Activated naive CD4-positive, alpha-beta T cell treated with anti-CD3 and anti-CD28 coated beads for 36 hours (primary cell): ENCODE measurements at regions of chr13 and their contacts with region 1.

Region 1: GRCh38 chr13:48400850-48401291 is 12.0 kb downstream of the LPAR6 start:
- DNase-seq: no peak
- H3K4me3 Mint-ChIP-seq: no peak overlapping the region
- H3K27ac Mint-ChIP-seq: peak overlapping the region; percentile 9
- H3K4me1 Mint-ChIP-seq: peaks cover 58% of the 10 kb centered on the region
- H3K27me3 Mint-ChIP-seq: no peaks in the 10 kb centered on the region

Region 2: DNA sequence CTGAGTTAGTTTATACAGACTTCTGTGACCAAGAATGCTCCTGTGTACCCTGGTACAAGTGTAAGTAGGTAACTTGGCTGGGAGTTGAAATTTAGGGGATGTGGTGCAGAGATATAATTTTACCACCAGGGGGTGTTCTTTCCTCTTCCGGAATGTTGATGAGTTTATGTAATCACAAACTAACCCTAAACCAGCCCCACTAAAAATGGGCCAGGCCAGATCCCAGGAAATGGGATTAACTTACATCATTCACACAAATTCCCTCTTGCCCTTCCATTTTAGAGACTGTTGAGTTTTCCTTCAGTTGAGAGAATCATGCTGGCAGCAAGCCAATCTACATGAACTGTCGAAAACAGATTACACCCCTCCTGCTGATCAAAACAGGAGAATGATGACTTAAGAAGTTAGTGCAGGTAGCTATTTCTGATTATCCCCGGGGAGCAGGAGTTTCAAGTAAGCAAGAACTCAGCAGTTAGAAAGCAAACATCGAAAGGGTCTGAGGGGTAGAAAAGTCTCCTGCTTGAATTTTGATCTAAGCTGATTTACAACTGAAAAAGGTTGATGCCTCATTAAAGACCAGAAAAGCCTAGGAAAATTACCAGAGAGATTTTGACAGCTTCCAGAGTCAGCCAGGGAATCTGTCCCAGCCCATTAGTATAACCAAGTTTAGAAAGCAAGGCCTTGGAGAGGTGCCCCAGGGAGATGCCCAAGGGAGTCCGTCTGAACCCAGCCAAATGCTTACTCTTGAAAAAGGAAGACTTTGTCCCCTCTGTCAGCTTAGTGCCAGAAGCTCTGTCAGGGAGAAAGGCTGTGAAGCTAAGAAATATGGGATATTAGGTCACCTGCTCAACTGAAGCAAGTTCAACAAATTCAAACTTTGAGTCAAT is 273.7 kb before region 1 on chr13:
- CTCF ChIA-PET with region 1: no interaction called
- intact Hi-C with region 1: loop called (anchors 5 kb)
- DNase-seq: peak; percentile 46
- H3K4me3 Mint-ChIP-seq: peak overlapping the region; percentile 0
- H3K27ac Mint-ChIP-seq: peak overlapping the region; percentile 44
- H3K4me1 Mint-ChIP-seq: peaks cover 29% of the 10 kb centered on the region
- H3K27me3 Mint-ChIP-seq: no peaks in the 10 kb centered on the region

Region 3: DNA sequence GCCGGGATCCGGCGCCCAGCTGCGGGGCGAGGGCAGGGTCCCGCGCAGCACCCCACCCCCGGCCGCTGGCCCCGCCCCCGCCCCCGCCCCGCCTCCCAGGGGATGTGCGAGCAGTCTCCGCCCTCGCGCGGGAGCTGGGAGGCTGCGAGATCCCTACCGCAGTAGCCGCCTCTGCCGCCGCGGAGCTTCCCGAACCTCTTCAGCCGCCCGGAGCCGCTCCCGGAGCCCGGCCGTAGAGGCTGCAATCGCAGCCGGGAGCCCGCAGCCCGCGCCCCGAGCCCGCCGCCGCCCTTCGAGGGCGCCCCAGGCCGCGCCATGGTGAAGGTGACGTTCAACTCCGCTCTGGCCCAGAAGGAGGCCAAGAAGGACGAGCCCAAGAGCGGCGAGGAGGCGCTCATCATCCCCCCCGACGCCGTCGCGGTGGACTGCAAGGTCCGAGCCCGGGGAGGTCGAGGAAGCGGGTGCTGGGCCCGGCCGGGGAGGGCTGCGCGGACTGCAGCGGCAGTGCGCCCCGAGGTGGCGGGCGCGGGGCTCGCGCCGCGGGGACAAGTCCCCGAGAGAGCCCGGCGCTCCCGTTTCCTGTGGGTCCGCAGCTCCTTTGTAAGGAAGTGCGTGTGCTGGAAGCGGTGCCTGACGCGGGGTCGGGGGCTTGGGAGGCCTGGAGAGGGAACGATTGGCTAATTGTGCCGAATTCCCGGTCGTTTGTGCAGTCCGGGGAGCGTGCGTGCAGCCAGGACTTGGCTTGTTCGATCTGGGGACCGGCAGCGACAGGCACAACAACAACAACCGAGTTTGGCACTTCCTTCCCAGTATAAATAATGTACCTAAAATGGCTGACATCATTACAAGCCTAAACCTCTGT is 167.6 kb before region 1 on chr13 and contains the start of gene ITM2B:
- CTCF ChIA-PET with region 1: no interaction called
- intact Hi-C with region 1: loop called (anchors 5 kb)
- DNase-seq: peak; percentile 70
- H3K4me3 Mint-ChIP-seq: peak within 1 kb of the TSS; percentile 87
- H3K27ac Mint-ChIP-seq: peak within 1 kb of the TSS; percentile 94
- H3K4me1 Mint-ChIP-seq: peaks cover 60% of the 10 kb centered on the region
- H3K27me3 Mint-ChIP-seq: no peaks in the 10 kb centered on the region
- total RNA-seq, gene ITM2B: 110 to 112 TPM

Region 4: GRCh38 chr13:48412881-48413351 is 12.0 kb after region 1 on chr13 and contains the start of gene LPAR6:
- CTCF ChIA-PET with region 1: no interaction called
- intact Hi-C with region 1: loop called (anchors 1 kb)
- DNase-seq: peak; percentile 20
- H3K4me3 Mint-ChIP-seq: peak within 1 kb of the TSS; percentile 84
- H3K27ac Mint-ChIP-seq: peak within 1 kb of the TSS; percentile 92
- H3K4me1 Mint-ChIP-seq: peaks cover 33% of the 10 kb centered on the region
- H3K27me3 Mint-ChIP-seq: no peaks in the 10 kb centered on the region
- total RNA-seq, gene LPAR6: 6.1 to 6.6 TPM

Region 5: GRCh38 chr13:48429886-48430285 is 29.0 kb after region 1 on chr13:
- CTCF ChIA-PET with region 1: no interaction called
- intact Hi-C with region 1: no loop called
- DNase-seq: no peak
- H3K4me3 Mint-ChIP-seq: no peak overlapping the region
- H3K27ac Mint-ChIP-seq: no peak overlapping the region
- H3K4me1 Mint-ChIP-seq: peaks cover 38% of the 10 kb centered on the region
- H3K27me3 Mint-ChIP-seq: no peaks in the 10 kb centered on the region

Region 6: DNA sequence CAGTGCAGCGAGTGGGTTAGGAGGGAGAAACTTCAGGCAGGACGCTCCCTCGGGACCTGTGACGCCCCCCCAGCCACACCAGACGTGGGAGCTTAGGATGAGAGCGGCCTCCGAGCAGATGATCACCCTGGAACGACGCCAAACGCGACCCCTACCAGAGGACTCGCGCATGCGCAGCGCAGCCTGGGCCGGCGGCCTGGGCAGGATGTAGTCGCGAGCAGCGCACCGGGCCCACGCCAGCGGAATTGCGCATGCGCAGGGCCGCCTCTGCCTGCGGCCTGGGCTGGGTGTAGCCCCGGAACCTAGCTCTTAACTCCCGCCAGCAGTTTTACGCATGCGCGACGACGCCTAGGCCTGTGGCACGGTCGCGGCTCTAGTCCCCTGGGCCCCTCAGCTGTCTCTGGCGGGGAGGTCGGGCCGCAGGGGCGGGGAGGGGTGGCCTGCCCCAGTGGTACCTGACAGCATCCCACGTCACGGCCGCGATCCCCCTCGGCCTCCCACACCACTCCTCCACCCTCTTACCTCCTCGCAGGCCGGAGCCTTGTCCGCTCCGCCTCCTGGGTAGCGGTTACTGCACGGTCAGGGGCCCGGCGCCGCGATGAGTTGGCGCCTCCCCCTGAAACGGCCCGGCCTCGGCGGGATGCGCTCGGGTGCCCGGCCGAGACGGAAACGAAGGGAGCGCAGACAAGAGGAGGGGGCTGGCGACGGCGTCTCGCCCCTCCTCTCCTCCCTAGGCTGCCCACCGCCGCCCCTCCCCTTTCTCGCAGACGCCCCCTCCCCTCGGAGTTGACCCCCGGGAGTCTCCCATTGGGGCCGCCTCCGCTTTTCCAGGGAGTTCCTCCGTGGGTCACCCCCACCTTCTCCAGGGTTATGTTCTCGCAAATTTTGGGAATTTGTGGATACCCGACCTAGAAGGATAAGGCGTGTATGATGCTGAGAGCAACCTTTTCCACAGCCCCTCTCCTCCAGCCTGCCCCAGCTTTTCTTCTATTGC is 131.9 kb after region 1 on chr13 and contains the start of gene RCBTB2:
- CTCF ChIA-PET with region 1: no interaction called
- intact Hi-C with region 1: loop called (anchors 1 kb)
- DNase-seq: peak; percentile 98
- H3K4me3 Mint-ChIP-seq: peak within 1 kb of the TSS; percentile 93
- H3K27ac Mint-ChIP-seq: peak within 1 kb of the TSS; percentile 97
- H3K4me1 Mint-ChIP-seq: peaks cover 17% of the 10 kb centered on the region
- H3K27me3 Mint-ChIP-seq: no peaks in the 10 kb centered on the region
- total RNA-seq, gene RCBTB2: 1.2 to 1.4 TPM

Region 7: GRCh38 chr13:48595431-48596429 is 194.9 kb after region 1 on chr13:
- CTCF ChIA-PET with region 1: no interaction called
- intact Hi-C with region 1: no loop called
- DNase-seq: peak; percentile 75
- H3K4me3 Mint-ChIP-seq: no peak overlapping the region
- H3K27ac Mint-ChIP-seq: no peak overlapping the region
- H3K4me1 Mint-ChIP-seq: peaks cover 4% of the 10 kb centered on the region
- H3K27me3 Mint-ChIP-seq: no peaks in the 10 kb centered on the region

Region 8: GRCh38 chr13:48653472-48653939 is 252.6 kb after region 1 on chr13 and contains the start of gene CYSLTR2:
- CTCF ChIA-PET with region 1: no interaction called
- intact Hi-C with region 1: loop called (anchors 5 kb)
- DNase-seq: peak; percentile 27
- H3K4me3 Mint-ChIP-seq: peak within 1 kb of the TSS; percentile 75
- H3K27ac Mint-ChIP-seq: peak within 1 kb of the TSS; percentile 82
- H3K4me1 Mint-ChIP-seq: peaks cover 29% of the 10 kb centered on the region
- H3K27me3 Mint-ChIP-seq: no peaks in the 10 kb centered on the region
- total RNA-seq, gene CYSLTR2: 1.3 to 1.7 TPM

Region 9: GRCh38 chr13:48879432-48879831 is 478.6 kb after region 1 on chr13:
- CTCF ChIA-PET with region 1: no interaction called
- intact Hi-C with region 1: loop called (anchors 5 kb)
- DNase-seq: no peak
- H3K4me3 Mint-ChIP-seq: no peak overlapping the region
- H3K27ac Mint-ChIP-seq: no peak overlapping the region
- H3K4me1 Mint-ChIP-seq: peaks cover 42% of the 10 kb centered on the region
- H3K27me3 Mint-ChIP-seq: no peaks in the 10 kb centered on the region